Activated CD8-positive, alpha-beta T cell treated with anti-CD3 and anti-CD28 coated beads for 36 hours (primary cell): ENCODE measurements at regions of chr7 and their contacts with region 1.

Region 1: GRCh38 chr7:143248761-143249354 is 14.4 kb upstream of the GSTK1 start:
- DNase-seq: no peak
- ATAC-seq: no peak
- H3K4me3 Mint-ChIP-seq: no peak overlapping the region
- H3K27ac Mint-ChIP-seq: peak overlapping the region; percentile 53
- H3K4me1 Mint-ChIP-seq: peaks cover 74% of the 10 kb centered on the region
- H3K27me3 Mint-ChIP-seq: no peaks in the 10 kb centered on the region
- CTCF ChIP-seq: no peak

Region 2: GRCh38 chr7:143263266-143264195 is 14.7 kb after region 1 on chr7 and contains the start of gene GSTK1:
- CTCF ChIA-PET with region 1: interaction called, 15 read pairs
- POLR2A ChIA-PET with region 1: interaction called, 6 read pairs
- intact Hi-C with region 1: no loop called
- DNase-seq: peak; percentile 86
- ATAC-seq: peak; percentile 96
- H3K4me3 Mint-ChIP-seq: peak within 1 kb of the TSS; percentile 90
- H3K27ac Mint-ChIP-seq: peak within 1 kb of the TSS; percentile 97
- H3K4me1 Mint-ChIP-seq: peaks cover 52% of the 10 kb centered on the region
- H3K27me3 Mint-ChIP-seq: no peaks in the 10 kb centered on the region
- CTCF ChIP-seq: no peak
- total RNA-seq, gene GSTK1: 163 to 171 TPM

Region 3: GRCh38 chr7:143299840-143300239 is 51.0 kb after region 1 on chr7:
- CTCF ChIA-PET with region 1: interaction called, 211 read pairs
- POLR2A ChIA-PET with region 1: interaction called, 4 read pairs
- intact Hi-C with region 1: no loop called
- DNase-seq: peak; percentile 67
- ATAC-seq: peak; percentile 90
- H3K4me3 Mint-ChIP-seq: no peak overlapping the region
- H3K27ac Mint-ChIP-seq: no peak overlapping the region
- H3K4me1 Mint-ChIP-seq: peaks cover 51% of the 10 kb centered on the region
- H3K27me3 Mint-ChIP-seq: no peaks in the 10 kb centered on the region
- CTCF ChIP-seq: peak; percentile 52